ENCODE measurements at regions of chr9 and their contacts with region 1.

Region 1: DNA sequence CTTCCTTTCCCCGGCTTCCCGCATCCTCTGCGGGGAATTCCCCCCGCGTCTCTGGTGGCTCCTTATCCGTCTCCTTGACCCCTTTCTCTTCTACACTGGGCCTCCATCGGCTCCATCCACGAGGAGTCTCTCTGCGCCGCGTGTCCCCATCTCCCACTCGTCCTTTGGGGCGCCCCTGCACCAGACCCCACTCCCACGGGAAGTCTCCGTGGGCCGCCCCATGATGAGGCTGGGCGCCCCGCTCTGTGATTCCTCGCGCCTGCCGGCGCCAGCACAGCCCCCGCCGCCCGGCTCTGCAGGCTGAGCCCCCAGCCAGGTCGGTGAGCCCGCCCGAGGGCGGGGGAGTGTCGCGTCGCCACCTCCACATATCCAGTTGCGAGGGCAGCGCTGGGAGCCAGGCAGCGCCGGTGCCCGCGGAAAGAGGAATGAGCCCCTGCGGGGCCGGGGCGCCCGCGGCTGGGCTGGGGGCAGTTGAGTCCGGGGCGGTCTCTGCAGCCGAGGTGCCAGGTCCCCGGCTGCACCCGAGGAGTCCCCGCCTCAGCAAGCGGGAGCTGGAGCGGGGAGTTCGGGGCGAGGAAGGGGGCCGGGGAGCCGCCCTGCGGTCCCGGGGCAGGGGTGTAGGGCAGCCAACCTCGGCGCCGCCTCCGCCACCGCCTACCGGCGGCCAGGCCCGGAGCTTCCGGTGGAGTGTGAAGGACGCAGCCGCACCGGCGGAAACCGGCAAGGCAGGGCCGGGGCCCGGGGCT is 2.1 kb upstream of the TRAF1 start:
- DNase-seq: peak; percentile 76
- ATAC-seq: peak; percentile 41
- H3K4me3 Mint-ChIP-seq: peak overlapping the region; percentile 87
- H3K27ac Mint-ChIP-seq: peak overlapping the region; percentile 99
- H3K4me1 Mint-ChIP-seq: peaks cover 89% of the 10 kb centered on the region
- H3K27me3 Mint-ChIP-seq: no peaks in the 10 kb centered on the region
- CTCF ChIP-seq: no peak

Region 2: DNA sequence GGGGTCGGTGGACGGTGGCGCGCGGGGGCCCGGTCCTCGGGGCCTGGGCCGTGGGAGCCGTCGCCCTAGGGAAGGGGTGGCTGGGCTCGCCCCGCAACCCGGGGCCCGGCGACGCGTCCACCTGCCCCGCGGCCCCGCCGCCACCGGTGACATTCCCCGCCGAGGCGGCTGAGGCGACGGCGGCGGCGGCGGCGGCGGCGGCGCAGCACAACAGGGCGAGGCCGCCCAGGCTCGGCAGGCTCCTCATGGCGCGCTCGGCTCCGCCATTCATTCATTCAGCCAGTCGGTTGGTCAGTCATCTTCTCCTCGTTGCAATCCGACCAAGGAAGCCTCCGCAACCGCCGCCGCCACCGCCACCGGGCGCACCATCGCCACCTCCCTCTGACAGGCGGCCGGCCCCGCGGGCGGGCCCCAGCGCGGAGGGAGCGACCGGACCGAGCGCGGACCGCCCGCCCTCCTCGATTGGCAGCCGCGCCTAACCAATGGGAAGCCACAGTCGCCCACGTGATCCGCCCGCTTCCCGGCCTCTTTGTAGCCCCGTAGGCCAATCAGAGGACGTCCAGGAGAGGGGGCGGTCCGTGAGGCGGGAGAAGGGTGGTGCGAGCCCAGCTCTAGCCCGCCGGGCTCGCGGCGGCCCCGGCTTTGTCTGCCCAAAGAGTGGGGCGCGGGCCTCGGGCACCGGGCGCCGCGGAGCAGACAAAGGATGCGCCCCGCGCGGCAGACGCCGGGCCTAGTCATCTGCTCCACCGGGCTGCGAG is 214.4 kb before region 1 on chr9 and contains the start of gene MEGF9:
- CTCF ChIA-PET with region 1: no interaction called
- POLR2A ChIA-PET with region 1: no interaction called
- intact Hi-C with region 1: loop called (anchors 5 kb)
- DNase-seq: peak; percentile 95
- ATAC-seq: peak; percentile 94
- H3K4me3 Mint-ChIP-seq: peak within 1 kb of the TSS; percentile 90
- H3K27ac Mint-ChIP-seq: peak within 1 kb of the TSS; percentile 86
- H3K4me1 Mint-ChIP-seq: peaks cover 38% of the 10 kb centered on the region
- H3K27me3 Mint-ChIP-seq: no peaks in the 10 kb centered on the region
- CTCF ChIP-seq: no peak
- total RNA-seq, gene MEGF9: 8.5 and 9.0 TPM in 2 replicates

Region 3: GRCh38 chr9:120854596-120855327 is 73.9 kb before region 1 on chr9:
- CTCF ChIA-PET with region 1: no interaction called
- POLR2A ChIA-PET with region 1: no interaction called
- intact Hi-C with region 1: no loop called
- DNase-seq: no peak
- ATAC-seq: no peak
- H3K4me3 Mint-ChIP-seq: no peak overlapping the region
- H3K27ac Mint-ChIP-seq: no peak overlapping the region
- H3K4me1 Mint-ChIP-seq: peaks cover 3% of the 10 kb centered on the region
- H3K27me3 Mint-ChIP-seq: no peaks in the 10 kb centered on the region
- CTCF ChIP-seq: no peak

Region 4: GRCh38 chr9:120868676-120869359 is 59.8 kb before region 1 on chr9:
- CTCF ChIA-PET with region 1: interaction called, 6 read pairs
- POLR2A ChIA-PET with region 1: interaction called, 12 read pairs
- intact Hi-C with region 1: loop called (anchors 1 kb)
- DNase-seq: peak; percentile 96
- ATAC-seq: peak; percentile 92
- H3K4me3 Mint-ChIP-seq: peak overlapping the region; percentile 91
- H3K27ac Mint-ChIP-seq: peak overlapping the region; percentile 97
- H3K4me1 Mint-ChIP-seq: peaks cover 25% of the 10 kb centered on the region
- H3K27me3 Mint-ChIP-seq: no peaks in the 10 kb centered on the region
- CTCF ChIP-seq: no peak

Region 5: DNA sequence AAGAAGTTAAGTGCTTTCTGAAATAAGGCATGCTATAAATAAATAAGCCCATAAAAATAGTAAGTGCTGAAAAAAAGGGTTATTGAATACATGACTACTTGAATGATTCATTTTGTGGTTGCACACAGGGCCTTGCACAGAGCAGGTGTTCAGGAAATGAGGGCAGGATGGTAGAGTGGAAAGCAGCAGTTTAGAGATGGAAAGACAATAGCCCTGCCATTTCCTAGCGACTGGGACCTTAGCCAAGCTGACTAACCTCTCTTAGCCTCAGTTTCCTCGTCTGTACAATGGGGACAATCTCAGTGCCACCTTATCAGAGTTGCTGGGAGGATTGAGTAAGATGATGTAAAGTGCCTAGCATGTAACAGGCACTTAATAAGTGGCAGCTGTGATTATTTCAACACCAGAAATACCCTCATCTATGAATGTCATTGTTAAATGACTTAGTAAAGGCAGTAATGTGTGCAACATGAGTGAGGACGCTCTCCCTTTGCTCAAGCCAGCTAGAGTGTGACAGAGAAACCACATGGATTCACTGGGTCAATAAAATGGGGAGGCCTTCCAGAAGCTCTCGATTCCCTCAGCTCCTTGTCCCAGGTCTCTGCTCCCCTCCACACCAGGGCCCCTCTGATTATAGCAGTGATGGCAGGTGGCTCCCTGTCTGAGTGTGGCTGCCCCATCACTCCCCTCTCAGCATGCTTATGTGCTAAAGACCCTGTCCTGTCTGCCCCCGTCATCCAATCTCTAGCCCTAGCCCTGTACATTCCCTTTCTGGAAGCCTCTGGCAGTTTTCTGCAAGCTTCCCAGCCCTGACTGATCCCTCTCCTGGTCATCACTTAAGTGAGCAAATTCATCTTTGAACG is 35.7 kb before region 1 on chr9:
- CTCF ChIA-PET with region 1: interaction called, 4 read pairs
- POLR2A ChIA-PET with region 1: interaction called, 179 read pairs
- intact Hi-C with region 1: loop called (anchors 1 kb)
- DNase-seq: no peak
- ATAC-seq: peak; percentile 82
- H3K4me3 Mint-ChIP-seq: peak overlapping the region; percentile 61
- H3K27ac Mint-ChIP-seq: peak overlapping the region; percentile 90
- H3K4me1 Mint-ChIP-seq: peaks cover 60% of the 10 kb centered on the region
- H3K27me3 Mint-ChIP-seq: no peaks in the 10 kb centered on the region
- CTCF ChIP-seq: no peak

Region 6: GRCh38 chr9:120909904-120910303 is 18.8 kb before region 1 on chr9:
- CTCF ChIA-PET with region 1: no interaction called
- POLR2A ChIA-PET with region 1: interaction called, 13 read pairs
- intact Hi-C with region 1: no loop called
- DNase-seq: no peak
- ATAC-seq: peak; percentile 71
- H3K4me3 Mint-ChIP-seq: peak overlapping the region; percentile 41
- H3K27ac Mint-ChIP-seq: peak overlapping the region; percentile 24
- H3K4me1 Mint-ChIP-seq: peaks cover 51% of the 10 kb centered on the region
- H3K27me3 Mint-ChIP-seq: no peaks in the 10 kb centered on the region
- CTCF ChIP-seq: no peak

Region 7: DNA sequence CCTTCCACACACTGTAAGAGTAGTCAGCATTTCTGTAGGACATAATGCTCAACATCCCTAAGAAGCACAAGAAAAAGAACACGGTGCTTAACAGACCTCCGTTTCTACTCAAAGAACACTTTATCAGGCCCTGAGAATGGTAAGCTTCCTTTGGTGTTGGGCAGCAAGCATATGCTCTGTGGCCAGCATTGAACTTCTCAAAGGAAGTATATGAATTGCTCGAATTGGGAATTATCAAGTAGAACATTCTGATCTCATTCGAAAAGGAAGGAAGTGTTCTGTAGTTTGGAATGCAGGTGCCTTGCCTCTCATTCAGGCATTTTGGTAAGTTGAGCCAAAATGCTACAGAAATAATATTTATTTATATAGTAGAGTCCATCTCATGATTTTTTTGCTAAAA is 60.4 kb after region 1 on chr9:
- CTCF ChIA-PET with region 1: no interaction called
- POLR2A ChIA-PET with region 1: no interaction called
- intact Hi-C with region 1: no loop called
- DNase-seq: no peak
- ATAC-seq: no peak
- H3K4me3 Mint-ChIP-seq: no peak overlapping the region
- H3K27ac Mint-ChIP-seq: no peak overlapping the region
- H3K4me1 Mint-ChIP-seq: no peaks in the 10 kb centered on the region
- H3K27me3 Mint-ChIP-seq: no peaks in the 10 kb centered on the region
- CTCF ChIP-seq: no peak

Region 8: DNA sequence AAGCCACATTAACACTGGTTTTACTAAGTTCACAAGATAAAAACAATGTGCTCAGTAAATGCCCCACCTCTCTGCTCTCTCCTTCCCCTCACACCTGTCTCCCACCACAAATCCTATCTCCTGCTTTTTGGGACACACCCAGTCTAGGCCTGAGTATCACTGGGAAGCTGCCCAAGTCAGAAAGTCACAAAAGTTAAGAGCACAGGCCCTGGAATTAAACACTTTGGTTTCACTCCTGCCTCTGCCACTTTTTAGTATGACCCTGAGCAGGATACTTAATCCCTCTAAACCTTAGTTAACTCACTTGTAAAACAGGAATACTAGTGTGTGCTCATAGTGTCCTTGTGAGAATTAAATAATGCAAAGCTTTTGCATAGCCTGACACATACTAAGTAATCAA is 110.1 kb after region 1 on chr9:
- CTCF ChIA-PET with region 1: no interaction called
- POLR2A ChIA-PET with region 1: no interaction called
- intact Hi-C with region 1: no loop called
- DNase-seq: no peak
- ATAC-seq: no peak
- H3K4me3 Mint-ChIP-seq: no peak overlapping the region
- H3K27ac Mint-ChIP-seq: no peak overlapping the region
- H3K4me1 Mint-ChIP-seq: no peaks in the 10 kb centered on the region
- H3K27me3 Mint-ChIP-seq: no peaks in the 10 kb centered on the region
- CTCF ChIP-seq: no peak

Region 9: DNA sequence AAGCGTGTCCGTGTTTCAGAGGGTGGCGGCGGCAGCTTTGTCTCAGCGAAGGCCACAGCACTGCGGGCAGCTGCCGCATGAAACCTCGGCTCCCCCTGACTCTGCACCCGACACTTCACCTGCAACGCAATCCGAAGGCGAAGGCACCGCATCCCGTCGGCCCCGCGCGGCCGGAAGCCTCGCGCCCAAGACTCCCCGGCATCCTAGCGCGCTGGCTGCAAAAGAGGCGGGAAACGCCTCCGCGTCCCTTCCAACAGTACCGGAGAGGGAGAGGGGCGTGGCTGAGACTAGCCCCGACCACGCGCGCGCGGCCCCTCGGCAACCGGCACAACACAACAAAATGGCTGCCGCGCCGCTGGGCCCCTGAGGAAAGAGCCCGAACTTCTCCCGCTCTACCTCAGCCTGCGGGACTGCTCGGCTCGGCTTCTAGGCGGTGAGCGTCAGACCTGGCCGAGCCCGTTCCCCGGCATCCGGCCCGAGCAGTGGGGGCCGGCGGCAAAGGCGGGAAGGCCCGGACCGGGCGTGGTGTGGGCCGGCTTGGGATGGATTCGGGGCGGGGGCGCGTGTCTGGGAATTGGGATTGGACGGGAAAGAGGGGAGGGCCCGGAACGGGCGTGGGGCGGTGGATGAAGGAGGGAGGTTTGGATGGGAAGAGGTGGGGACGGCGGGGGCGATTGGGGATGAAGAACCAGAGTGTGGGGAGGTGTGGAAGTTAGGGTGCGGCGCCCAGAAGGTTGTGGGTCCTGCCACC is 146.2 kb after region 1 on chr9 and contains the start of gene CNTRL:
- CTCF ChIA-PET with region 1: no interaction called
- POLR2A ChIA-PET with region 1: interaction called, 6 read pairs
- intact Hi-C with region 1: loop called (anchors 1 kb)
- DNase-seq: peak; percentile 77
- ATAC-seq: peak; percentile 68
- H3K4me3 Mint-ChIP-seq: peak within 1 kb of the TSS; percentile 96
- H3K27ac Mint-ChIP-seq: peak within 1 kb of the TSS; percentile 98
- H3K4me1 Mint-ChIP-seq: peaks cover 75% of the 10 kb centered on the region
- H3K27me3 Mint-ChIP-seq: no peaks in the 10 kb centered on the region
- CTCF ChIP-seq: no peak
- total RNA-seq, gene CNTRL: 98.4 and 110 TPM in 2 replicates

Measured in activated B cell treated with CpG ODN at 0.5 μM for 24 hours (primary cell).